ENCODE measurements at regions of chr3 and their contacts with region 1.

Region 1: DNA sequence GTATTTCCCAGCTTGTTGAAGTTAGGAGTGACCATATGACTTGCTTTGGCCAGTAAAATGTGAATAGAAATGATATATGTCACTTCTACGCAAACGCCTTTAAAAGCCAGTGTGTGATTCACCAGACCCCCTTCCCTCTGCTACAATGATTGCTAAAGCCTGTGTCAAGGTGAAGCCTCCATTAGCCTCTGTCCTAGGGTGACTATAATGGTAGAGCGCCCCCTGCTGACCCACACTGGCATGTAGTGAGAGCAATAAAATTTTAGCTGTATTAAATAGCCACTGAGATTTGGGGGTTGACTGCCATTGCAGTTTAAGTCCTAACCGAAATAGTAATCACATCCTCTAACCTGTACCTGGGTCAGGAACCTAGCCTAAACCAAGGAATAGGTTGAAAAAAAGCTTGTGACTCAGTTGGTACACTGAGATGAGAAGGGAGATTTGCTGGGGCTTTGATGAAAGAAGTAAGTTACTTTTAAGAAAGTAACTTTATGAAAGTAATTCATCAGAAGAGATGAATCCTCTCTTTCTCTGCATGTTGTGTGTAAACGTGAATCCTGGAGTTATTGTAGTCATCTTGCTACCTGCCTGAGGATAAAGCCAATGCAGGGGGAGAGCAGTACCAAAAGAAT is 52.6 kb downstream of the GTF2E1 start:
- DNase-seq: peak; percentile 73
- ATAC-seq: peak; percentile 76
- H3K4me3 ChIP-seq: no peak overlapping the region
- H3K4me3 Mint-ChIP-seq: no peak overlapping the region
- H3K27ac ChIP-seq: no peak overlapping the region
- H3K27ac Mint-ChIP-seq: no peak overlapping the region
- H3K4me1 ChIP-seq: no peaks in the 10 kb centered on the region
- H3K4me1 Mint-ChIP-seq: no peaks in the 10 kb centered on the region
- H3K27me3 ChIP-seq: no peaks in the 10 kb centered on the region
- H3K27me3 Mint-ChIP-seq: no peaks in the 10 kb centered on the region
- CTCF ChIP-seq: peak; percentile 76

Region 2: DNA sequence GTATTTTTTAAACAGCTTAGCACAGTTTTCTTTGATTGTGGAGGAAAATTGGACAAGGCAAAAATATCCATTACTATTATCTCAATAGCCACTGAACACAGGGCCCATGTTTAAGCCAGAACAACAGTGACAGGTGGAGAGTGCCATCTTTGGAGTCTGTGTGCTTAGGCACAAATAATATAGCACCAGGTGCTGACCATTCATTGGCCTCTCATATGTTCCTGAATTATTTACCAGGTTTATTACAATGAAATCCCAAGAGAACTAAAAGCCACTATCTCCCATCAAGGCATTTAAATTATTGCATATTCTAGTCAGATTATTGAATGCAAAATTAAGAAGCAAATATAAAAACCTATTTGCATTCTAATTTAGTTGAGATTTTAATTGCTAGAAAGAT is 549.7 kb before region 1 on chr3:
- CTCF ChIA-PET with region 1: interaction called, 8 read pairs
- POLR2A ChIA-PET with region 1: no interaction called
- intact Hi-C with region 1: loop called (anchors 10 kb)
- DNase-seq: no peak
- ATAC-seq: no peak
- H3K4me3 ChIP-seq: no peak overlapping the region
- H3K4me3 Mint-ChIP-seq: no peak overlapping the region
- H3K27ac ChIP-seq: no peak overlapping the region
- H3K27ac Mint-ChIP-seq: no peak overlapping the region
- H3K4me1 ChIP-seq: no peaks in the 10 kb centered on the region
- H3K4me1 Mint-ChIP-seq: no peaks in the 10 kb centered on the region
- H3K27me3 ChIP-seq: peaks cover 0 to 8% (median 5%) of the 10 kb centered on the region in 4 experiments
- H3K27me3 Mint-ChIP-seq: peaks cover 41% of the 10 kb centered on the region
- CTCF ChIP-seq: no peak

Region 3: GRCh38 chr3:120730576-120731542 is 64.3 kb before region 1 on chr3:
- CTCF ChIA-PET with region 1: no interaction called
- POLR2A ChIA-PET with region 1: no interaction called
- intact Hi-C with region 1: no loop called
- DNase-seq: no peak
- ATAC-seq: no peak
- H3K4me3 ChIP-seq: no peak overlapping the region
- H3K4me3 Mint-ChIP-seq: no peak overlapping the region
- H3K27ac ChIP-seq: no peak overlapping the region
- H3K27ac Mint-ChIP-seq: no peak overlapping the region
- H3K4me1 ChIP-seq: no peaks in the 10 kb centered on the region
- H3K4me1 Mint-ChIP-seq: no peaks in the 10 kb centered on the region
- H3K27me3 ChIP-seq: no peaks in the 10 kb centered on the region
- H3K27me3 Mint-ChIP-seq: no peaks in the 10 kb centered on the region
- CTCF ChIP-seq: no peak

Region 4: GRCh38 chr3:120767106-120767505 is 28.0 kb before region 1 on chr3:
- CTCF ChIA-PET with region 1: interaction called, 10 read pairs
- POLR2A ChIA-PET with region 1: no interaction called
- intact Hi-C with region 1: no loop called
- DNase-seq: no peak
- ATAC-seq: no peak
- H3K4me3 ChIP-seq: no peak overlapping the region
- H3K4me3 Mint-ChIP-seq: no peak overlapping the region
- H3K27ac ChIP-seq: no peak overlapping the region
- H3K27ac Mint-ChIP-seq: no peak overlapping the region
- H3K4me1 ChIP-seq: no peaks in the 10 kb centered on the region
- H3K4me1 Mint-ChIP-seq: peaks cover 36% of the 10 kb centered on the region
- H3K27me3 ChIP-seq: no peaks in the 10 kb centered on the region
- H3K27me3 Mint-ChIP-seq: no peaks in the 10 kb centered on the region
- CTCF ChIP-seq: no peak

Region 5: DNA sequence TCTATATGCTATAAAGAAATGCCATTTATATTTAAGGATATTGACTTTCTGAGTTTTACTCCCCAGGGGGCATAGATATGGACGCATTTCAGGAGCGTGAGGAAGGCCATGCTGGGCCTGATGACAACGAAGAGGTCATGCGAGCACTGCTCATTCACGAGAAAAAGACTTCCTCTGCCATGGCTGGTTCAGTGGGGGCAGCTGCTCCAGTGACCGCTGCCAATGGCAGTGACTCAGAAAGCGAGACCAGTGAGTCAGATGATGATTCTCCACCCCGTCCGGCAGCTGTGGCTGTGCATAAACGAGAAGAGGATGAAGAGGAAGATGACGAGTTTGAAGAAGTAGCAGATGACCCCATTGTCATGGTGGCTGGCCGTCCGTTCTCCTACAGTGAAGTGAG is 14.2 kb before region 1 on chr3:
- CTCF ChIA-PET with region 1: interaction called, 12 read pairs
- POLR2A ChIA-PET with region 1: no interaction called
- intact Hi-C with region 1: no loop called
- DNase-seq: no peak
- ATAC-seq: no peak
- H3K4me3 ChIP-seq: no peak overlapping the region
- H3K4me3 Mint-ChIP-seq: no peak overlapping the region
- H3K27ac ChIP-seq: no peak overlapping the region
- H3K27ac Mint-ChIP-seq: no peak overlapping the region
- H3K4me1 ChIP-seq: no peaks in the 10 kb centered on the region
- H3K4me1 Mint-ChIP-seq: peaks cover 7% of the 10 kb centered on the region
- H3K27me3 ChIP-seq: no peaks in the 10 kb centered on the region
- H3K27me3 Mint-ChIP-seq: no peaks in the 10 kb centered on the region
- CTCF ChIP-seq: no peak

Measured in B cell (primary cell).